Ovary (tissue), 10 donors: ENCODE measurements at regions of chr2 and their contacts with region 1.

Region 1: DNA sequence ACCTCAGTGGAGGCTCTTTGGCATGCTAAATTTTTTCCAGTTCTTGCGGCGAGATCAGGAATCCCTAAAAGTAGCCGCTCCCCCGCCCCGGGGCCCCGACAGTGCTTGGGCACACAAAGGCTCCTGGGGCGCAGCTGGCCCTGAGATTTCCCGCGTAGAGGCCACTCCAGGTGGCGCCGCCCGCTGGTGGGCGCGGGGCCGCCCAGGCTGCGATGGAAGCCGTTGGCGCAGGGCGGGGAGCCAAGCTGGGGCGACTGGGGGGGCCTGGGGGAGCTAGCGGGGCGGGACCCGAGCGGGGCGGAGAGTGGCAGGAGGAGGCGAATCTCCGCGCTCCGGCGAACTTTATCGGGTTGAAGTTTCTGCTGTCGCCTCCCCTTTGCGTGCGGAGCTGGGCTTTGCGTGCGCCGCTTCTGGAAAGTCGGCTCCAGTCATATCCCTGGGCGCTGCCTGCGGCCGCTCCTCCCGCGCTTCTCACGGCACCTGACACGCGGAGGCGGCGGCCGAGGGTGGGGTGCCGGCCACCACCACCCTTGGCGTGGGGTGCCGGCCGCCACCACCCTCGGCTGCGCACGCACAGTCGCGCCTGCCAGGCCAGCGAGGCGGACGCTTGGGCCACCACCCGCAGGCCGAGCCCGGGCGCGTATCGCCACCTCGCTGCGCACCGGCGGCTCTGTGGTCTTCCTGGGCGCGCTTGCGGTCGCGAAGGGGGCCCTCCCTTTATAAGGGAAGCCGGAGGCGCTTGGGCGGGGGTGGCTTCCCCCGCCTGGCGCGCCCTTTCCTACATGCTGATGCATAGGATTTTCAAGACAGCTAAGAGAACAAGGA is 867 bp upstream of the CYP1B1 start:
- DNase-seq: peak; percentile 60 to 78 (median 66)
- H3K4me3 ChIP-seq: peak overlapping the region; percentile 44
- H3K27ac ChIP-seq: peak overlapping the region; percentile 52 to 71
- H3K4me1 ChIP-seq: peaks cover 3% of the 10 kb centered on the region
- H3K27me3 ChIP-seq: no peaks in the 10 kb centered on the region
- CTCF ChIP-seq: peak in 1 of 3 donors; percentile 49
- EP300 ChIP-seq: peak; percentile 5
- POLR2A ChIP-seq: peak; percentile 26

Region 2: GRCh38 chr2:38164881-38165280 is 88.1 kb after region 1 on chr2:
- intact Hi-C with region 1: loop called in 1 of 4 experiments (anchors 10 kb)
- DNase-seq: no peak
- H3K4me3 ChIP-seq: no peak overlapping the region
- H3K27ac ChIP-seq: no peak overlapping the region
- H3K4me1 ChIP-seq: peaks cover 9% of the 10 kb centered on the region
- H3K27me3 ChIP-seq: no peaks in the 10 kb centered on the region
- CTCF ChIP-seq: no peak
- EP300 ChIP-seq: no peak
- POLR2A ChIP-seq: no peak

Region 3: DNA sequence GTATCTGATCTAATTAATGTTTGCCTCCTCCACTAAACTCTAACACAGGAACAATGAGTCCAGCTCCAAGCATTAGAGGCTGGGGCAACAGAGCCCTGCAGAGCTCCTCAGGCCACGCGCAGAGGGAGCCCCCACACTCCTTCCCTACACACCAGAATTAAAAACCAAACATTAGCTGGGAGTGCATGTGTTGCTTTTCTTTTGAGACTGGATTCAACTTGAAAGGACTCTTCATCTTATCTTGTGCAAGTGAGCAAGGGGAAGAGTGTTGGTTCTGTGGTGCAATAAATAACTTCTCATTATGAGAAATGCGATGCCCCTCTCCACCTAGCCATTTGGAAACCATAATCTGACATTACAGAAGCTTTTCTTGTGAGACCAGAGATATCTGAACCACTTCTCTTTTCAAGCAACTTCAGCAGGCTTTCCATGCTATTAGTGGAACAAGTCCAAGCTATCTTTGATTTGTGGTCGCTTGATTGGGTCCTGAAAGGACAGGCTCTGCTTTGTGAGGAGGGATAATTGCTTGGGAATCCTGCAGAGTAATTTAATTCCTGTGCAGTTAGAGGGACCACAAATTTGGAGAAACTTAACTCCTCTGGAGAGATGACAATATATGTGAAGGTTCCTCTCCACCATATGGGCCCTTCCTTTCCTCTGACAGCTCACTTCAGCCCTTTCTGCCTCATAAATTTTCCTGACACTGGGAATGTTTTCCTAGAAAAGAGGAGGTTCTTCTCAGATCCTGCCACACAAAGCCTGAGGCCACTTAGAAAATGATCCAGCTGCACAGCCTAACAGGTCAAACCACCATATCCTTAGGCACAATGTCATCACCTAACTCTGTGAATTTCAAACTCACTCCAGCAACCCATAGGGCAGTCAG is 187.8 kb after region 1 on chr2:
- intact Hi-C with region 1: loop called in 1 of 4 experiments (anchors 10 kb)
- DNase-seq: no peak
- H3K4me3 ChIP-seq: no peak overlapping the region
- H3K27ac ChIP-seq: no peak overlapping the region
- H3K4me1 ChIP-seq: peaks cover 4% of the 10 kb centered on the region
- H3K27me3 ChIP-seq: no peaks in the 10 kb centered on the region
- CTCF ChIP-seq: no peak
- EP300 ChIP-seq: no peak
- POLR2A ChIP-seq: no peak

Region 4: DNA sequence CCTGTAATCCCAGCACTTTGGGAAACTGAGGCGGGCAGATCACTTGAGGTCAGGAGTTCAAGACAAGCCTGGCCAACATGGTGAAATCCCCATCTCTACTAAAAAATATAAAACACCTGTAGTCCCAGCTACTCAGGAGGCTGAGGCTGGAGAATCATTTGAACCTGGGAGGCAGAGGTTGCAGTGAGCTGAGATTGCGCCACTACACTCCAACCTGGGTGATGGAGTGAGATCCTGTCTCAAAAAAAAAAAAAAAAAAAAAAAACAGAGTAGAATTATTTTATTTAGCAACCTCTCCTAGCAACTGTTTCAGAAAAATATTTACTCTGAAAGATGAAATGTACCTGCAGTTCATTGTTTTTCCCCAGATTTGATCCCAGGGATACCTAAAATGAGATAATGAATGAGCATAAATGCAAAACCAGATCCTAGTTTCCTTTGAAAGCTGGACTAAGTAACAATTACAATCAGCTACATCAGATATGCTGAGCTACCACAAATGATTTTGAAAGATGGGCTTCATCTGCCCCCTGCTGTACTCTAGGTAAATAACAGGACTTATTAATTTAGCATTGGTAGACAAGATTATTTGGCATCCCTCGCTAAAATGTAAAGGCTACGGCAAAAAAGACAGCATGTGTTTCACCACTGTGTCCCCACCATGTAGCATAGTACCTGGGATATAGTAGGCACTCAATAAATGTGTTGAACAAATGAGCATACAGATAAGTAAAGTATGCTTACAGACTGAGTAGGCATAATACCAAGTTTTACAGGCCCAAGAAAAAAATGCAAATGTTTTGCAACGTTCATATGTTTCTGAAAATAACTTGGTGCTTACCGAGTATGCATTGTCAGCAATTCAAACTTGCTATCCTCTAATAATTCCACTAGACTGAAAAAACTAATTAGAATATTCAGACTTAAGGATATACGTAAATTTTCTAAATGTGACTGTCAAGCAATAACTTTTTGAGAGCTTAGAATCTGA is 197.8 kb after region 1 on chr2:
- intact Hi-C with region 1: loop called (anchors 5 to 10 kb)
- DNase-seq: peak in 2 of 5 donors; percentile 19 to 44
- H3K4me3 ChIP-seq: no peak overlapping the region
- H3K27ac ChIP-seq: no peak overlapping the region
- H3K4me1 ChIP-seq: no peaks in the 10 kb centered on the region
- H3K27me3 ChIP-seq: no peaks in the 10 kb centered on the region
- CTCF ChIP-seq: peak; percentile 51 to 93 (median 91)
- EP300 ChIP-seq: no peak
- POLR2A ChIP-seq: no peak